Spleen (tissue), 13 donors: ENCODE measurements at regions of chr20 and their contacts with region 1.

Region 1: GRCh38 chr20:38221119-38221589 is 39.4 kb downstream of the KIAA1755 start:
- DNase-seq: peak; percentile 91
- H3K4me3 ChIP-seq: peak overlapping the region in 2 of 8 donors; percentile 1 to 32
- H3K27ac ChIP-seq: no peak overlapping the region
- H3K4me1 ChIP-seq: peaks cover 0 to 19% (median 6%) of the 10 kb centered on the region in 6 donors
- H3K27me3 ChIP-seq: no peaks in the 10 kb centered on the region
- CTCF ChIP-seq: peak; percentile 67 to 94 (median 89)
- POLR2A ChIP-seq: no peak

Region 2: DNA sequence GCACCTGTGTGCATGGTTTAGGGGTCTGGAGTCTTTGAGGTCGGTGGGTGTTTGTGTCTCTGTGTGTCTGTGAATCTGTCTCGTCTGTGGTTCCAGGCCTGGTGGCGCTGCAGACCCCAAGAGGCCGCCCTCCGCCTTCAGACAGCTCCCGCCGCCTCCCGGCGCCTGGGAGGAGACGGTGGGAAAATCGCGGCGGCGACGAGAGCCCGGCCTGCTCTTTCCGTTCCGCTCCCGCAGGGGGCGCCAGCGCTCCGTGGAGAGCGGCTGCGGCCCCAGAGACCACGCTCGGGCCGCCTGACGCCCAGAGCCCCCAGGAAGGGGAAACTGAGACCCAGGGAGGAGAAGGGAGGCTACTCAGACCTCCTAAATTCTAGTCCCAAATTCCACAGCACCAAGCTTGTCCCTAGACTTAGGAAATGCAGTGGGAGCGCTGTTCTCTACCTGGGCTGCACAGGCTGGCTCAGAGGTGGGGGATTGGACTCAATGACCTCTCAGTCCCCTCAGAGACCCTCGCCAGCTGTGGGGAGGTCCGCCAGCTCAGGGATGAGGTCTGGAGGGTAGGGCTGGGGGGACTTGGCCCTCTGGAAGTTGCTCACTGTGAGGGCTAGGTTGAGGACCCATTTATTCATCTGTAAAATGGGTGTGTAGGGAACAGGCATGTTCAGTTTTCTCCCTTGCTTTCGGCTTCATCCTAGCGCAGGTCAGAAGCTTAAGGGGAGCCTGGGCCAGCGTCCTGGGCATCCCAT is 656.6 kb before region 1 on chr20:
- intact Hi-C with region 1: loop called (anchors 5 kb)
- DNase-seq: peak; percentile 85
- H3K4me3 ChIP-seq: peak overlapping the region in 1 of 8 donors; percentile 28
- H3K27ac ChIP-seq: no peak overlapping the region
- H3K4me1 ChIP-seq: peaks cover 0 to 20% (median 6%) of the 10 kb centered on the region in 6 donors
- H3K27me3 ChIP-seq: peaks cover 0 to 81% (median 15%) of the 10 kb centered on the region in 7 donors
- CTCF ChIP-seq: peak; percentile 49 to 92 (median 88)
- POLR2A ChIP-seq: no peak

Region 3: GRCh38 chr20:38057351-38057972 is 163.7 kb before region 1 on chr20:
- intact Hi-C with region 1: loop called (anchors 5 kb)
- DNase-seq: peak; percentile 94
- H3K4me3 ChIP-seq: no peak overlapping the region
- H3K27ac ChIP-seq: peak overlapping the region in 5 of 8 donors; percentile 1 to 40 (median 29)
- H3K4me1 ChIP-seq: peaks cover 3 to 33% (median 9%) of the 10 kb centered on the region in 6 donors
- H3K27me3 ChIP-seq: no peaks in the 10 kb centered on the region
- CTCF ChIP-seq: peak; percentile 55 to 88 (median 80)
- POLR2A ChIP-seq: no peak

Region 4: GRCh38 chr20:38073307-38074071 is 147.7 kb before region 1 on chr20:
- intact Hi-C with region 1: loop called (anchors 5 kb)
- DNase-seq: no peak
- H3K4me3 ChIP-seq: no peak overlapping the region
- H3K27ac ChIP-seq: peak overlapping the region in 7 of 8 donors; percentile 7 to 68 (median 39)
- H3K4me1 ChIP-seq: peaks cover 0 to 60% (median 20%) of the 10 kb centered on the region in 6 donors
- H3K27me3 ChIP-seq: no peaks in the 10 kb centered on the region
- CTCF ChIP-seq: peak; percentile 47 to 80 (median 73)
- POLR2A ChIP-seq: no peak

Region 5: DNA sequence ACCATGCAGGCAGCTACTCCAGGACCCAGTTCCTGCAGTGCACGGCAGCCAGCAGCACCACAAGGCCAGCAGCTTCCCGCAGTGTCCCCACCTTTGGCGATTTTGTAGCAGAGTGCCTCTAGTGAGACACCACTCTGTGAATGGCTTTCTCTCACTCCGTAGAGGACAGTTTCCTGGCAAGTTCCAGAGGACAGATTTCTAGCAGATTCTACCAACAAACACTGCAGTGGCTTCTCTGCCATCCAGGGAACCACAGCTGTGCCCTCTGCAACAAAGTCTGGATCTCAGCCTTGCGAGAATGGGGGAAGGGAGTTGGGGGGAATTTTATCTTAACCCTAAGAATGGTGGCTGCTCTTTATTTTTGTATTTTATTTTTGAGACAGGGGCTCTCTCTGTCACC is 185.3 kb after region 1 on chr20:
- intact Hi-C with region 1: no loop called
- DNase-seq: no peak
- H3K4me3 ChIP-seq: no peak overlapping the region
- H3K27ac ChIP-seq: no peak overlapping the region
- H3K4me1 ChIP-seq: no peaks in the 10 kb centered on the region
- H3K27me3 ChIP-seq: no peaks in the 10 kb centered on the region
- CTCF ChIP-seq: no peak
- POLR2A ChIP-seq: no peak